Activated CD4-positive, alpha-beta memory T cell treated with anti-CD3 and anti-CD28 coated beads for 36 hours (primary cell): ENCODE measurements at regions of chr12 and their contacts with region 1.

Region 1: DNA sequence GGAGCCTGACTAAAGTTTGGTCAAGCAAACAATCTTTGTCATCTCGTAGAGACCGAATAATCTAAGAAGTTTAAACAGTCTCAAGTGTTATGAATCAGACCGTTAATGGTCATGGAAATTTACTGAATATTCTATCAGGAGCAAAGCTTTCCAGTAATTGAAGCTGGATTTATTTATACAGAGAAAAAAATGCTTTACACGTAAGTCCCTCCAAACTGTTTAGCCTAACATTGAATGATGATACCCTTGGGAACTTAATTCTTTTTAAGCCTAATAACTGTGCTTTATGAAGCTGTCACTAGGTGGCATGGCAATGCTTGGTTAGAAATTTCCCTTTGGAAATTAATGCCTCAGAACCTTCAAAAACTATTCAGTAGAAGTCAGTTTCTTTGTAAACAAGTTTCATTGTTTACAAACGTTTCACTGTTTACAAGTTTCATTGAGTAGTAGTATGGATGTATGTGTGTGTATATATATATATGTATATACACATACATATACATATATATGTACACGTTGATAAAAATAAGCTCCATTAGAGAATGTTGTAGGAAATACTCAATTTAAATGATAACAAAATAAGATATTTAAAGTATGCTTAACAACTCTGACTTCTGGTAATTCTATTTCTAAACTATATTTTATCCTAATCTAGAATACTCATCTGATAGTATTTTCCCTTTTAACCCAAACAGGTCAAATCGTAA is 32.1 kb downstream of the DEPDC4 start:
- DNase-seq: no peak
- H3K4me3 Mint-ChIP-seq: no peak overlapping the region
- H3K27ac Mint-ChIP-seq: no peak overlapping the region
- H3K4me1 Mint-ChIP-seq: no peaks in the 10 kb centered on the region
- H3K27me3 Mint-ChIP-seq: no peaks in the 10 kb centered on the region

Region 2: GRCh38 chr12:99997806-99998205 is 236.9 kb before region 1 on chr12:
- CTCF ChIA-PET with region 1: no interaction called
- POLR2A ChIA-PET with region 1: no interaction called
- intact Hi-C with region 1: no loop called
- DNase-seq: no peak
- H3K4me3 Mint-ChIP-seq: no peak overlapping the region
- H3K27ac Mint-ChIP-seq: no peak overlapping the region
- H3K4me1 Mint-ChIP-seq: no peaks in the 10 kb centered on the region
- H3K27me3 Mint-ChIP-seq: peaks cover 2% of the 10 kb centered on the region

Region 3: GRCh38 chr12:100404769-100405407 is 170.1 kb after region 1 on chr12:
- CTCF ChIA-PET with region 1: interaction called, 17 read pairs
- POLR2A ChIA-PET with region 1: no interaction called
- intact Hi-C with region 1: loop called (anchors 2 kb)
- DNase-seq: peak; percentile 51
- H3K4me3 Mint-ChIP-seq: no peak overlapping the region
- H3K27ac Mint-ChIP-seq: no peak overlapping the region
- H3K4me1 Mint-ChIP-seq: no peaks in the 10 kb centered on the region
- H3K27me3 Mint-ChIP-seq: peaks cover 4% of the 10 kb centered on the region

Region 4: DNA sequence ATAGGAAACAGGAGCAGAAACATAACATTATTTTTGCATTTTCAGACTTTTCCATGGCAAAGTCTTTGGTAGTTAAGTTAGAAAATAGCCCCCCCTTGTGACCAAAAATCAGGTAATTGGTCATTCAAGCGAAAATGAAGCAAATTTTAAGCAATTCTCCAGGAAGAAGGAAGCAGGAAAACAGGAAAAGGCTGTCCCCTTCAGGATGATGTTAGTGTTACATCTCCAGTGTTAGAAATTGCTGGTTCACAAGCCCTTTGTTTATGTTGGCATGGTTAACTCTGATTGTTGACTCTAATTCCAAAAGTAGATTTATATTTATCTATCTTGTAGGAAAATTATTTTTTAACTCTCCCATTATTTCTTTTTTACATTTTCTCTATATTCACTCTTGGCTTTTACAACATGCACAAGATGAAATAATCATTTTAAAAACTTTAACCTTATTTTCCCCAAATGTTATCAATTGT is 319.9 kb after region 1 on chr12:
- CTCF ChIA-PET with region 1: interaction called, 6 read pairs
- POLR2A ChIA-PET with region 1: no interaction called
- intact Hi-C with region 1: loop called (anchors 1 kb)
- DNase-seq: no peak
- H3K4me3 Mint-ChIP-seq: no peak overlapping the region
- H3K27ac Mint-ChIP-seq: no peak overlapping the region
- H3K4me1 Mint-ChIP-seq: no peaks in the 10 kb centered on the region
- H3K27me3 Mint-ChIP-seq: peaks cover 2% of the 10 kb centered on the region

Region 5: GRCh38 chr12:100668945-100669536 is 434.3 kb after region 1 on chr12:
- CTCF ChIA-PET with region 1: interaction called, 18 read pairs
- POLR2A ChIA-PET with region 1: no interaction called
- intact Hi-C with region 1: loop called (anchors 2 kb)
- DNase-seq: peak; percentile 67
- H3K4me3 Mint-ChIP-seq: no peak overlapping the region
- H3K27ac Mint-ChIP-seq: no peak overlapping the region
- H3K4me1 Mint-ChIP-seq: no peaks in the 10 kb centered on the region
- H3K27me3 Mint-ChIP-seq: peaks cover 5% of the 10 kb centered on the region